Psoas muscle (tissue), 8 donors: ENCODE measurements at regions of chr3 and their contacts with region 1.

Region 1: GRCh38 chr3:140953028-140953960 is 11.7 kb downstream of the SLC25A36 start:
- DNase-seq: no peak
- ATAC-seq: peak in 3 of 4 donors; percentile 43 to 75 (median 70)
- H3K4me3 ChIP-seq: no peak overlapping the region
- H3K27ac ChIP-seq: peak overlapping the region; percentile 43
- H3K4me1 ChIP-seq: peaks cover 37% of the 10 kb centered on the region
- H3K27me3 ChIP-seq: no peaks in the 10 kb centered on the region
- CTCF ChIP-seq: no peak

Region 2: GRCh38 chr3:139361276-139361675 is 1592.0 kb before region 1 on chr3:
- intact Hi-C with region 1: no loop called
- DNase-seq: no peak
- ATAC-seq: no peak
- H3K4me3 ChIP-seq: no peak overlapping the region
- H3K27ac ChIP-seq: no peak overlapping the region
- H3K4me1 ChIP-seq: no peaks in the 10 kb centered on the region
- H3K27me3 ChIP-seq: no peaks in the 10 kb centered on the region
- CTCF ChIP-seq: no peak

Region 3: GRCh38 chr3:140906785-140907184 is 46.5 kb before region 1 on chr3:
- intact Hi-C with region 1: loop called in 1 of 2 experiments (anchors 10 kb)
- DNase-seq: no peak
- ATAC-seq: no peak
- H3K4me3 ChIP-seq: no peak overlapping the region
- H3K27ac ChIP-seq: no peak overlapping the region
- H3K4me1 ChIP-seq: no peaks in the 10 kb centered on the region
- H3K27me3 ChIP-seq: no peaks in the 10 kb centered on the region
- CTCF ChIP-seq: no peak

Region 4: GRCh38 chr3:141000027-141000663 is 46.9 kb after region 1 on chr3:
- intact Hi-C with region 1: no loop called
- DNase-seq: peak; percentile 63 to 75
- ATAC-seq: peak; percentile 86 to 97 (median 94)
- H3K4me3 ChIP-seq: no peak overlapping the region
- H3K27ac ChIP-seq: no peak overlapping the region
- H3K4me1 ChIP-seq: no peaks in the 10 kb centered on the region
- H3K27me3 ChIP-seq: no peaks in the 10 kb centered on the region
- CTCF ChIP-seq: peak; percentile 80